ENCODE measurements at regions of chr13 and their contacts with region 1.

Region 1: GRCh38 chr13:97221989-97222700 is at the start of gene MBNL2:
- DNase-seq: peak; percentile 95
- H3K4me3 ChIP-seq: peak within 1 kb of the TSS; percentile 58
- CTCF ChIP-seq: no peak

Region 2: GRCh38 chr13:96904232-96904631 is 317.9 kb before region 1 on chr13:
- in situ Hi-C with region 1: no loop called
- DNase-seq: no peak
- H3K4me3 ChIP-seq: no peak overlapping the region
- CTCF ChIP-seq: no peak

Region 3: GRCh38 chr13:97109841-97110492 is 112.2 kb before region 1 on chr13:
- in situ Hi-C with region 1: loop called (anchors 25 kb)
- DNase-seq: peak; percentile 83
- H3K4me3 ChIP-seq: no peak overlapping the region
- CTCF ChIP-seq: peak; percentile 82

Region 4: GRCh38 chr13:97411984-97412383 is 189.8 kb after region 1 on chr13:
- in situ Hi-C with region 1: no loop called
- DNase-seq: no peak
- H3K4me3 ChIP-seq: no peak overlapping the region
- CTCF ChIP-seq: no peak

Region 5: GRCh38 chr13:98026457-98026857 is 804.3 kb after region 1 on chr13:
- in situ Hi-C with region 1: no loop called
- DNase-seq: peak; percentile 44
- H3K4me3 ChIP-seq: no peak overlapping the region
- CTCF ChIP-seq: no peak